Breast epithelium (tissue), 4 donors: ENCODE measurements at regions of chr12 and their contacts with region 1.

Region 1: GRCh38 chr12:16685107-16685506 is 79.1 kb upstream of the LMO3 start:
- DNase-seq: no peak
- H3K4me3 ChIP-seq: no peak overlapping the region
- H3K27ac ChIP-seq: no peak overlapping the region
- H3K4me1 ChIP-seq: no peaks in the 10 kb centered on the region
- H3K27me3 ChIP-seq: no peaks in the 10 kb centered on the region
- CTCF ChIP-seq: no peak
- POLR2A ChIP-seq: no peak

Region 2: GRCh38 chr12:15050659-15051058 is 1634.4 kb before region 1 on chr12:
- intact Hi-C with region 1: no loop called
- DNase-seq: no peak
- H3K4me3 ChIP-seq: no peak overlapping the region
- H3K27ac ChIP-seq: no peak overlapping the region
- H3K4me1 ChIP-seq: no peaks in the 10 kb centered on the region
- H3K27me3 ChIP-seq: no peaks in the 10 kb centered on the region
- CTCF ChIP-seq: no peak
- POLR2A ChIP-seq: no peak

Region 3: GRCh38 chr12:16608946-16609539 is 76.1 kb before region 1 on chr12:
- intact Hi-C with region 1: loop called (anchors 2 kb)
- DNase-seq: no peak
- H3K4me3 ChIP-seq: peak overlapping the region in 2 of 3 donors; percentile 8 to 23
- H3K27ac ChIP-seq: no peak overlapping the region
- H3K4me1 ChIP-seq: no peaks in the 10 kb centered on the region
- H3K27me3 ChIP-seq: no peaks in the 10 kb centered on the region
- CTCF ChIP-seq: no peak
- POLR2A ChIP-seq: no peak

Region 4: DNA sequence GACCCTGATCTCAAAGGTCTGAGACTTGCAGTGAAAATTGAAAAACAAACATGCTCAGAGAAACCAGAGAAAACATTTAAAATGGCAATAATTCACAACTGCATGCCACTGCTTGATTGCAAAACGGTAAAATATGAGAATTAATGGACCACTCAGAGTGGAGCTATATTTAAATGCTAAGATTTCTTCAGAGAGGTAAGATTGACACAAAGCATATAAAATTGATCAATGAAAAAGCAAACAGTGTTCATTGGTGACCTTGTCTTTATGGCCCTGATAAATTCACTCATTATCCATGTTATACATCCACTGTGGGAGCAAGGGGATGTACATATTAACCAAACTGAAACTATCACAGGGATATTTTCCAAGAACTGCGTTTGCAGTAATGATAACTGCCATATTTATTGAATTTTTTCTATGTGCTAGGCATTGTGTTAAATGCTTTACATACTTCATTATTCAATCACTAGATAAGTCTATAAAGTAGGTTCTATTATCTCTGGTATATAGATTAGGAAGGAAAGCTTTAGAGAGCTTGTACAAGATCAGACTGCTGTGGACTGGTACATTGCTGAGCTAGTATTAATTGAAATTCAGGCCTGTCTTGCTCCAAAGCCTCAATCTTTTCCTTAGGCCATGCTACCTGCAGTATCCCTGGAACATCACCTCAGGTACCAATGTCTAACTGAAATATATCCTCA is 34.8 kb after region 1 on chr12:
- intact Hi-C with region 1: no loop called
- DNase-seq: no peak
- H3K4me3 ChIP-seq: no peak overlapping the region
- H3K27ac ChIP-seq: no peak overlapping the region
- H3K4me1 ChIP-seq: no peaks in the 10 kb centered on the region
- H3K27me3 ChIP-seq: no peaks in the 10 kb centered on the region
- CTCF ChIP-seq: no peak
- POLR2A ChIP-seq: no peak

Region 5: DNA sequence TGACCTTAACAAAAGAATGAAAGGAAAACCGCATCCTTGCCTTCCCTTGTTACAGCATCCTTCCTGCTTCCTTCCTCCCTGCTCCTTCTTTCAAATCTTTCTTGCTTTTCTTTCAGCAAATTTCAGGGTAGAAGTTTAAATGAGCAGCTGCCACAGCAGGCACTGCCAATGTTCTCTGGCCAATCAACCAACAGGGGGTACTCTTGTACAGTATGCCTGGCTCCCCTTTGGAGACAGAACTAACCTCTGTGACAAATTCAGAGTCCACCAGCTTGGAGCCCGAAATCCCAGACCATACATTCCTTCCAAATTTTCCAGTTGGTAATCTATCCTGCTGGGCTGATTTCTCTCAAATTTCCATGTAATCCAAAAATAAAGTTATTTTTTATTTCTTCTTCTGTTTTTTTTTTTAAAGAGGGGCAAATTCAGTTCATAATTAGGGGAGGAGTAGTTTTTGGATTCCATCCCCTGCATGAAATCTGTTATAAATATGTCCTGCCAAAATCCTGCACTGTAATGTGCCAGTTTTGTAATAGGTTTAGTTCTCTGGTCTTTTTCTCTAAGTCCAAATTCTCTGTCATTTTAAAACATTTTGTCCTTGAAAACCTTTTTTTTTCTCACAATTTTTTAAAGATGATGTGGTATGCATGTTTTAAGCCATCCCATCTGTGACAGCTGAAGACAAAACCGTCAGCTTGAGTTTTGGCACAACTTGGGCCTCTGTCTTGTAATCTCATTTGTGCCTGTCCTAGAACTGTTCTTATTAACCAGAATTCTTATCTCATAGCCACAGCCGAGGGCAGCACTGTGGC is 530.9 kb after region 1 on chr12:
- intact Hi-C with region 1: no loop called
- DNase-seq: no peak
- H3K4me3 ChIP-seq: no peak overlapping the region
- H3K27ac ChIP-seq: no peak overlapping the region
- H3K4me1 ChIP-seq: no peaks in the 10 kb centered on the region
- H3K27me3 ChIP-seq: no peaks in the 10 kb centered on the region
- CTCF ChIP-seq: no peak
- POLR2A ChIP-seq: no peak